GM10248 (cell line): ENCODE measurements at regions of chr13 and their contacts with region 1.

Region 1: GRCh38 chr13:45718063-45718462 is 15.9 kb downstream of the CBY2 start:
- DNase-seq: peak; percentile 48
- CTCF ChIP-seq: peak; percentile 69

Region 2: GRCh38 chr13:45482571-45483173 is 235.4 kb before region 1 on chr13:
- CTCF ChIA-PET with region 1: no interaction called
- POLR2A ChIA-PET with region 1: no interaction called
- DNase-seq: no peak
- CTCF ChIP-seq: no peak

Region 3: GRCh38 chr13:45511310-45512097 is 206.6 kb before region 1 on chr13:
- CTCF ChIA-PET with region 1: interaction called, 15 read pairs
- POLR2A ChIA-PET with region 1: no interaction called
- DNase-seq: peak; percentile 58
- CTCF ChIP-seq: peak; percentile 90

Region 4: GRCh38 chr13:45700971-45701900 is 16.8 kb before region 1 on chr13:
- CTCF ChIA-PET with region 1: interaction called, 61 read pairs
- POLR2A ChIA-PET with region 1: no interaction called
- DNase-seq: peak; percentile 29
- CTCF ChIP-seq: peak; percentile 59

Region 5: DNA sequence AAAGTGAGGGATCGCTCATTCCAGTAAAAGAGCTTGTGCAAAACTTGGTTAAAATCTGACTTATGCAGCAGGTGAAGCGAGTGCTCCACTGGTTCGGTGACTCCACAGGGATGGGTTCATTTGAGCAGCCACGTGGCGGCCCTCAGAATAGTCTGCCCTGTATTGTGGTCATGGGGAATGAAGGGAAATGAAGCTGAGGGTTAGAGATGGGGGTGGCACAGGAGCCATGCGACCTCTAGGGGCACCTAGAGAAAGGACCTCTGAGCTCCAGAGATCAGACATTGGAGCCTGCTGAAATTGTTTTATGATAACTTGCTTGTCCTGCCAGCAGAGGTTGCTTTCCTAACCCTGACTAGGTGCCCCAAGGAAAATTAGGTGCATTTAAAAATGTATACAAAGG is 10.7 kb after region 1 on chr13:
- CTCF ChIA-PET with region 1: interaction called, 19 read pairs
- POLR2A ChIA-PET with region 1: no interaction called
- DNase-seq: peak; percentile 34
- CTCF ChIP-seq: peak; percentile 36

Region 6: GRCh38 chr13:45826731-45827130 is 108.7 kb after region 1 on chr13:
- CTCF ChIA-PET with region 1: no interaction called
- POLR2A ChIA-PET with region 1: no interaction called
- DNase-seq: no peak
- CTCF ChIP-seq: no peak

Region 7: GRCh38 chr13:45882626-45883025 is 164.6 kb after region 1 on chr13:
- CTCF ChIA-PET with region 1: no interaction called
- POLR2A ChIA-PET with region 1: no interaction called
- DNase-seq: no peak
- CTCF ChIP-seq: no peak